GM12878 (cell line): ENCODE measurements at regions of chr13 and their contacts with region 1.

Region 1: DNA sequence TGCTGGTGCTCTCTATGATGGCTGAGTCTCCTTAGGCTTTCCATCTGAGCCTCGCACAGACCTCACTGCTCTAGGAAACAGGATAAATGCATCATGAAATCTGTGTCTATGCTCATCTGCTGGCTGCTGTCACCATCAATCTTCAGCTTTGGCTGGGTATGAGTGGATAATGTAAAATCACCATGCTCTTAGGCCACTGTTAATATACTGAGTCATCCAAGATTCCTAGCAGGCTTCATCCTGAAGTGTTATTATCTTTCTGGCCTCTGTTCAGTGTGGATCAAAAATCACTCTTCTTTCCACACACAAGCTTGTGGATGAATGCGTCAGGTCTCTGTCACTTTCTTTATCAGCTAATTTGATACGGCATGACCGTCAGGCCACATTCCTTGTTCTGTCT is 317.4 kb downstream of the NALCN start:
- DNase-seq: no peak
- ATAC-seq: no peak
- H3K4me3 ChIP-seq: no peak overlapping the region
- H3K27ac ChIP-seq: no peak overlapping the region
- H3K4me1 ChIP-seq: no peaks in the 10 kb centered on the region
- H3K27me3 ChIP-seq: peaks cover 0 to 5% of the 10 kb centered on the region in 2 experiments; a peak in 1 of 4 replicates
- CTCF ChIP-seq: no peak
- EP300 ChIP-seq: no peak
- POLR2A ChIP-seq: no peak
- RAD21 ChIP-seq: no peak

Region 2: GRCh38 chr13:101127741-101128353 is 29.0 kb after region 1 on chr13:
- CTCF ChIA-PET with region 1: interaction called, 10 read pairs
- POLR2A ChIA-PET with region 1: no interaction called
- RAD21 ChIA-PET with region 1: no interaction called
- SMC1A ChIA-PET with region 1: interaction called, 3 read pairs
- in situ Hi-C with region 1: no loop called
- intact Hi-C with region 1: no loop called
- DNase-seq: no peak
- ATAC-seq: peak; percentile 90
- H3K4me3 ChIP-seq: no peak overlapping the region
- H3K27ac ChIP-seq: no peak overlapping the region
- H3K4me1 ChIP-seq: no peaks in the 10 kb centered on the region
- H3K27me3 ChIP-seq: no peaks in the 10 kb centered on the region
- CTCF ChIP-seq: peak; percentile 61 to 76 (median 68)
- EP300 ChIP-seq: no peak
- POLR2A ChIP-seq: no peak
- RAD21 ChIP-seq: peak; percentile 75

Region 3: GRCh38 chr13:101272886-101273285 is 174.0 kb after region 1 on chr13:
- CTCF ChIA-PET with region 1: no interaction called
- POLR2A ChIA-PET with region 1: no interaction called
- RAD21 ChIA-PET with region 1: no interaction called
- SMC1A ChIA-PET with region 1: no interaction called
- in situ Hi-C with region 1: no loop called
- intact Hi-C with region 1: no loop called
- DNase-seq: no peak
- ATAC-seq: no peak
- H3K4me3 ChIP-seq: no peak overlapping the region
- H3K27ac ChIP-seq: no peak overlapping the region
- H3K4me1 ChIP-seq: no peaks in the 10 kb centered on the region
- H3K27me3 ChIP-seq: no peaks in the 10 kb centered on the region; a peak in 1 of 4 replicates
- CTCF ChIP-seq: no peak
- EP300 ChIP-seq: no peak
- POLR2A ChIP-seq: no peak
- RAD21 ChIP-seq: no peak